Breast epithelium (tissue), 4 donors: ENCODE measurements at regions of chr12 and their contacts with region 1.

Region 1: DNA sequence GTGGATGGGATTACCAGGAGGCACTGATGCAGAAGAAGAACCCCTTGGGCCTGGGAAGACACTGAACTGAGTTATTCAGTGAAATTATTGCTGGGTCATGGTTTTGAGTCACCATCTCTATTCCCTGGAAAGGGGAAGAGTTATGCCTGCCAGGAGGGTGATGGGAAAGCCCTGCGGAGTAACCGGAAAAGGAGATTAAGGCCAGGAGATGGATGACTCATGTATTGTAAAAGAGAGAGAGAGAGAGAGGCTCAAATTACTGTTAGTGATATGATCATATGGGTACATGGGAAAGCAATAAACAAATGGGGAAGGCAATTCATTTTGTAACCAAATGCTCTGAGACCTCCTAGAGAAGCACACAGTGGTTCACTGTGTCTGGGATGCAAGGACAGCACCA is 243.9 kb downstream of the TMEM132D start:
- DNase-seq: no peak
- H3K4me3 ChIP-seq: no peak overlapping the region
- H3K27ac ChIP-seq: no peak overlapping the region
- H3K4me1 ChIP-seq: no peaks in the 10 kb centered on the region
- H3K27me3 ChIP-seq: no peaks in the 10 kb centered on the region
- CTCF ChIP-seq: no peak
- POLR2A ChIP-seq: no peak

Region 2: DNA sequence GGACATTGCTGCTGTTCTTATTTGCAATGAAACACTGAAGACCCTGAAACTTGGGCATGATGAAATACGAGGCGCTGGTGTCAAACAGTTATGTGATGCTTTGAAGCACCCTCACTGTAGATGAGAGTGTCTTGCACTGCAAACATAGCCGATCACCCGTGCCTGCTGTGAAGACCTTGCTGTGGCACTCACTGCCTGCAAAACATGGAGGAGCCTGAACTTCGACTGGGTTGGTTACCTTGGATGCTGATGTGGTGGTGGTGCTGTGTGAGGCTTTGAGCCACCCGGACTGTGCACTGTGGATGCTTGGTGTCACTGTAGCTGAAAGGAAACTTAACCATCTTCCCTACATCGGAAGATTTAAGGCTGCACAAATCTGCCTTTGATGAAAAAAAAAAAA is 643.8 kb before region 1 on chr12:
- intact Hi-C with region 1: loop called (anchors 5 kb)
- DNase-seq: no peak
- H3K4me3 ChIP-seq: no peak overlapping the region
- H3K27ac ChIP-seq: no peak overlapping the region
- H3K4me1 ChIP-seq: no peaks in the 10 kb centered on the region
- H3K27me3 ChIP-seq: no peaks in the 10 kb centered on the region
- CTCF ChIP-seq: no peak
- POLR2A ChIP-seq: no peak

Region 3: DNA sequence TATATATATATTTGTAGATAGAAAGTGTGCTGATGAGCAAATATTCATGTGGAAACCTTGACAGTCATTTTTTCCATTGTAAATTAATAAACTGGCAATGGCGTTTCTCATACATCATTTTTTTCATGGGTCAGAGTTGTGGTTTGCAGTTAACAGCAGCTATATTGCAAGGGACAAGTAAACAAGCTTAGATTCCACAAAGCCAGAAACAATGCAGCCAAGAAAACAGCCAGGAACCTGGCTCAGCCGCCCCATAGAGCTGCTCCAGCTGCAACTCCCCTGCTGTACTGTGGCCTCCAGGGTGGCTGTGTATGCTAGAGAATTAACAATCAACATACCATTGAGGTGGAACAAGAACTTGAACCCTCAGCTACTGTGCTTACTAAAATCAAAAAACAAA is 54.3 kb before region 1 on chr12:
- intact Hi-C with region 1: no loop called
- DNase-seq: no peak
- H3K4me3 ChIP-seq: no peak overlapping the region
- H3K27ac ChIP-seq: no peak overlapping the region
- H3K4me1 ChIP-seq: no peaks in the 10 kb centered on the region
- H3K27me3 ChIP-seq: no peaks in the 10 kb centered on the region
- CTCF ChIP-seq: no peak
- POLR2A ChIP-seq: no peak

Region 4: GRCh38 chr12:129696926-129697325 is 37.0 kb after region 1 on chr12:
- intact Hi-C with region 1: no loop called
- DNase-seq: no peak
- H3K4me3 ChIP-seq: no peak overlapping the region
- H3K27ac ChIP-seq: no peak overlapping the region
- H3K4me1 ChIP-seq: no peaks in the 10 kb centered on the region
- H3K27me3 ChIP-seq: no peaks in the 10 kb centered on the region
- CTCF ChIP-seq: no peak
- POLR2A ChIP-seq: no peak